Spleen (tissue), 13 donors: ENCODE measurements at regions of chr4 and their contacts with region 1.

Region 1: GRCh38 chr4:68490826-68491457 is 43.7 kb downstream of the TMPRSS11E start:
- DNase-seq: no peak
- H3K4me3 ChIP-seq: no peak overlapping the region
- H3K27ac ChIP-seq: no peak overlapping the region
- H3K4me1 ChIP-seq: peaks cover 0 to 10% (median 2%) of the 10 kb centered on the region in 6 donors
- H3K27me3 ChIP-seq: no peaks in the 10 kb centered on the region
- CTCF ChIP-seq: no peak
- POLR2A ChIP-seq: no peak

Region 2: GRCh38 chr4:68630373-68630772 is 139.4 kb after region 1 on chr4:
- intact Hi-C with region 1: loop called (anchors 5 kb)
- DNase-seq: no peak
- H3K4me3 ChIP-seq: no peak overlapping the region
- H3K27ac ChIP-seq: no peak overlapping the region
- H3K4me1 ChIP-seq: no peaks in the 10 kb centered on the region
- H3K27me3 ChIP-seq: no peaks in the 10 kb centered on the region
- CTCF ChIP-seq: no peak
- POLR2A ChIP-seq: no peak